Dorsolateral prefrontal cortex (tissue), 120 donors: ENCODE measurements at regions of chr3 and their contacts with region 1.

Region 1: DNA sequence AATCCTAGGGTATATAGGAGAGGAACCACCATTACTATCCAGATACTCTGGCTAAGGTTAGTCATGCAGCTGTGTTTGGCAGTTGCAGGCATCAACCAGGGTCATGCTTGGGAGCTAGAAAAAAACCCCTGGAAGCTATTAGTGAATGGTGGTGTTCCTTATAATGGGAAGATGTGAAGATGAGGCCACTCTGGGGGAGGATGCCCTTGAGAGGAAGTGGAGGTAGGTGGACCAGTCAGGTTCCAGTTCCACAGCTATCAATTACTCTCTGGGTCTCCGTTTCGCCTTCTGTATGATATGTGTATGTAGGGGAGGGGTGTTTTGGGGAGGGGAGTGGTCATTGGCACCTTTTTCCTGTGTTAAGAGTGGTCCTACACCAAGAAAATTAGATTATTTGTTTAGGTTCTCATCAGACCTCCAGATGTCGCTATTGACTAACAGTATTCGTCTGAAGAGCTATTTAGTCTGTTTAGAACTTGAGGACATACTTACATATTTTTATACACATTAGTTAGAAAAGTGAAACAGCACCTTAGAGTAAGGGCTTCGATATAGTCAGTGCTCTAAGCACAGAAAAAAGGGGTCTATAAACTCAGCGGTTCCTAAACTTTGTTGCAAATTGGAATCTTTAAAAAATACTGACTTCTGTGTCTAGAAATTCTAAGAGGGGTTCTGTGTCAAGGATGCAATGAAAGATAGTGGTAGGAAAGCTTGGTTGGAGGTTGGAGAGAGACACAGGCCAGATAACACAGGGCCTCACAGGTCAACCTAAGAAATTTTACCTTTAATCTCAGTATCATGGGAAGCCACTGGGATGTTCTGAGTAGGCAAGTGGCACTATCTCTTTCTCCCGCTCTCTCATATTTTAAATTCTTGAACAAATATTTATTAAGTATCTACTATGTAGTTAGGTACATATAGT is 9.1 kb upstream of the HPS3 start:
- DNase-seq: no peak
- H3K4me3 ChIP-seq: no peak overlapping the region
- H3K27ac ChIP-seq: no peak overlapping the region
- H3K27me3 ChIP-seq: no peaks in the 10 kb centered on the region
- CTCF ChIP-seq: peak; percentile 48 to 92 (median 74)

Region 2: DNA sequence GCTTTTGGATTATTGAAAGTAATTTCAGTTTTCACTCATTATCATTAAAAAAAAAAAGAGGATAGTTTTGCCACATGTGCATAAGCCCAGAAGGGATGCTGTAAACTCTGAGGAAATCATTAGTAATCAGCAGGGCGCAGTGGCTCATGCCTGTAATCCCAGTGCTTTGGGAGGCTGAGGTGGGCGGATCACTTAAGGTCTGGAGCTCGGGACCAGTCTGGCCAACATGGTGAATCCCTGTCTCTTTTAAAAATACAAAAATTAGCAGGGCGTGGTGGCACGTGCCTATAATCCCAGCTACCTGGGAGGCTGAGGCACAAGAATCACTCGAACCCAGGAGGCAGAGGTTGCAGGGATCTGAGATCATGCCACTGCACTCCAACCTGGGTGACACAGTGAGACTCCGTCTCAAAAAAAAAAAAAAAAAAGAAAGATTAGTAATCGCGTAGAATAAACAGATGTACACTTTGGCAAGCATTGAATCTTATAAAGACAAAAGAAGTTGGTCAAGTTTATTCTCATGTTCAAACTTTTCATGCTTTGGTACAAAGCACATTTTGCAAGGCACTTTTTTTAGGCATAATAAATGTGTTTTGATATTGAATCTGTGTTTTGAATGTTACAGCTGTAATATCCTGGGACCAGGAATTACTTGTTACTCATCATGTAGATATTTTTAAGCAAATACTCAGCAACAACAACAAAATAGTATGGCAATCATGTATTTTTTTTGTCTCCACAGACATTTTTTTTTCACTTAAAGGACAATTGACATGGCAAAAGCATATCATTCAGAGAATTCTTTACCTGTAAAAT is 515.8 kb before region 1 on chr3:
- intact Hi-C with region 1: no loop called
- DNase-seq: no peak
- H3K4me3 ChIP-seq: no peak overlapping the region
- H3K27ac ChIP-seq: no peak overlapping the region
- H3K27me3 ChIP-seq: no peaks in the 10 kb centered on the region
- CTCF ChIP-seq: no peak

Region 3: GRCh38 chr3:149273096-149273751 is 152.9 kb after region 1 on chr3:
- intact Hi-C with region 1: loop called (anchors 1 to 5 kb)
- DNase-seq: peak in 2 of 10 donors; percentile 36 to 45
- H3K4me3 ChIP-seq: no peak overlapping the region
- H3K27ac ChIP-seq: no peak overlapping the region
- H3K27me3 ChIP-seq: no peaks in the 10 kb centered on the region
- CTCF ChIP-seq: peak; percentile 87 to 100 (median 96)

Region 4: GRCh38 chr3:149330609-149331331 is 210.5 kb after region 1 on chr3:
- intact Hi-C with region 1: loop called in 1 of 2 experiments (anchors 5 kb)
- DNase-seq: no peak
- H3K4me3 ChIP-seq: peak overlapping the region in 2 of 59 donors; percentile 2 to 34
- H3K27ac ChIP-seq: no peak overlapping the region
- H3K27me3 ChIP-seq: peaks cover 0 to 4% (median 0%) of the 10 kb centered on the region in 45 donors
- CTCF ChIP-seq: no peak